ENCODE measurements at regions of chr1 and their contacts with region 1.

Region 1: GRCh38 chr1:197146197-197146889 is at the start of gene ASPM:
- DNase-seq: peak; percentile 94 to 96 (median 96)
- ATAC-seq: peak; percentile 99 to 100 (median 100)
- H3K4me3 ChIP-seq: peak within 1 kb of the TSS; percentile 49 to 83 (median 66)
- H3K27ac ChIP-seq: peak within 1 kb of the TSS in 1 of 12 donors; percentile 61
- H3K4me1 ChIP-seq: peaks cover 0 to 20% (median 5%) of the 10 kb centered on the region in 12 donors
- H3K27me3 ChIP-seq: peaks cover 0 to 11% (median 0%) of the 10 kb centered on the region in 9 donors
- CTCF ChIP-seq: no peak
- POLR2A ChIP-seq: no peak
- total RNA-seq, gene ASPM: 0.19 to 5.9 (median 0.46) TPM

Region 2: DNA sequence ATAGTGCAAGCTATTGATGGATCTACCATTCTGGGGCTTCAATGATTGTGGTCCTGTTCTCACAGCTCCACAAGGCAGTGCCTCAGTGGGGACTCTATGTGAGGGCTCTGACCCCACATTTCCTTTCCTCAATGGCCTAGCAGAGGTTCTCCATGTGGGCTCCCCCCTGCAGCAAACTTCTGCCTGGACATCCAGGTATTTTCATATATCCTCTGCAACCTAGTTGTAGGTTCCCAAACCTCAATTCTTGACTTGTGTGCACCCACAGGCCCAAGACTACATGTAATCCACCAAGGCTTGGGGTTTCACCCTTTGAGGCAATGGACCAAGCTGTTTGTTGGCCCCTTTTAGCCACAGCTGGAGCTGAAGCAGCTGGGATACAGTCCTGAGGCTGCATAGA is 407.6 kb before region 1 on chr1:
- intact Hi-C with region 1: loop called in 1 of 10 experiments (anchors 5 kb)
- DNase-seq: no peak
- ATAC-seq: no peak
- H3K4me3 ChIP-seq: no peak overlapping the region
- H3K27ac ChIP-seq: no peak overlapping the region
- H3K4me1 ChIP-seq: no peaks in the 10 kb centered on the region
- H3K27me3 ChIP-seq: no peaks in the 10 kb centered on the region
- CTCF ChIP-seq: no peak
- POLR2A ChIP-seq: no peak

Region 3: DNA sequence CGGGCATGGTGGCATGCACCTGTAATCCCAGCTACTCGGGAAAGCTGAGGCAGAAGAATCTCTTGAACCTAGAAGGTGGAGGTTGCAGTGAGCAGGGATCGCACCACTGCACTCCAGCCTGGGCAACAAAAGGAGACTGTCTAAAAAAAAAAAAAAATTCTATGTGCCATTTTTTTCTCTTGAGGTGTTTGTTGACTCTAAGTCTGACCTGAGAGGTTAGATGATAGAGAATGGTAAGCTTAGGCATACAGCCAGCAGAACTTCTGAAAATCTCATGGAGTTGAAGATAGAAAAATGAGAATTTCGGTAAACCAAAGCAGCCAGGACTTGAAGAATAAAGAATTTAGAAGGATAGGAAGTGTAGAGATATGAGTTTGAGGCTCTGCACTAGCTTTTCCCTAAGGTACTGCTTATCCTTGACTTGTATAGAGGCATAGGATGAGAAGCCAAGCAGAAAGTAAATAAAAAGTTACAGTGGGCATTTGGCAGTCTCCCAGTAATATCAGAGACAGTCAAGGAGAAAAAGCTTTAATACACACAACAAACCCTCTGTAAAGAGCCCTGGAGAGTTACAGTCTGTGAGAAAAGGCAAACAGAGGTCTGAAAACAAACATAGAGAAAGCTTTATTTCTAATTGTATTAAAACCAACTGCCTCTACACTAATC is 103.5 kb before region 1 on chr1:
- intact Hi-C with region 1: no loop called
- DNase-seq: no peak
- ATAC-seq: no peak
- H3K4me3 ChIP-seq: no peak overlapping the region
- H3K27ac ChIP-seq: no peak overlapping the region
- H3K4me1 ChIP-seq: no peaks in the 10 kb centered on the region
- H3K27me3 ChIP-seq: no peaks in the 10 kb centered on the region
- CTCF ChIP-seq: no peak
- POLR2A ChIP-seq: no peak